Activated T-helper 2 cell treated with anti-CD3 and anti-CD28 coated beads, Interferon-gamma antibody, Interleukin-2, Interleukin-4, amounts not matched to agents 10 μg/mL and 5 μg/mL and 100 μg/mL, durations not matched to agents 14 hours and 24 hours and 36 hours (primary cell): ENCODE measurements at regions of chr7 and their contacts with region 1.

Region 1: DNA sequence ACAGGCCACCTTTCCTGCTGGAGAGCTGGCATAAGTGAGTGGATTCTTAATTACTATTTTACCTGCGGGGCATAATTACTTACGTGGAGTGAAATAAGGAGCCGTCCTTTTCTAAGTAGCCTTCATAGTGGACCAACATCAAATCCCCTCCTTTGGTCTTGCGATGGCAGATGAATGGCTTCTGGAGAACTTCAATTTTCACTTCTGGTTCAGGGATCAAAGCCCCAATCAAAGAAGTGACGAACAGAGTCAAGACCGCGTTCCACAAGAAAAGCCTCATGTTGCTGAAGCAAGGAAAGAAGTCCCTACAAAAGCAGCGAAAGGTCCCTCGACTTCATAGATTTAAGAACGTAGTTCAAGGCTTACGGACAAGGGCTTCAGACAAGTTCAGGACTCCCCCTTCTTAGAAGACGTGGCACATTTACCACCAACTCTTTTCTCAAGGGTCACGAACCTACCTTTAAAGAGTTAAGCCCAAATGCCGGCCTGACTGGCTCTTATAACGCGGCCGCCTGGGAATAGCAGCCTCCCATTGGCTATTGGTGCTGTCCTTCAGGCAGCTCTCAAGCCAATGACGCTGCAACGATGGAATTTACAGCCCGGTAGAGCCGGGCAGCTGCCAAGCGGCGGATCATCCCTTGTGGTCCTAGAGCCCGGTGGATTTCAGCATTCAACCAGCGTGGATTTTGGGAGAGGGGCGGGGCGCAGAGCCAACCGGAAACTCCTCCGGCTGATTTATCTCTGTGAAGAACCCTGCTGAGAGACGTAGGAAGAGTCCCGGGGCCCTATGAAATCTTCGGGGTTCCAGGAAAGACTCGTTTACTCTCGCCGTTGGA is at the start of gene FKBP14:
- DNase-seq: peak; percentile 90
- H3K4me3 Mint-ChIP-seq: peak within 1 kb of the TSS; percentile 93
- H3K27ac Mint-ChIP-seq: peak within 1 kb of the TSS; percentile 84
- H3K4me1 Mint-ChIP-seq: peaks cover 35% of the 10 kb centered on the region
- H3K27me3 Mint-ChIP-seq: no peaks in the 10 kb centered on the region
- total RNA-seq, gene FKBP14: 8.0 and 10.0 TPM in 2 replicates

Region 2: DNA sequence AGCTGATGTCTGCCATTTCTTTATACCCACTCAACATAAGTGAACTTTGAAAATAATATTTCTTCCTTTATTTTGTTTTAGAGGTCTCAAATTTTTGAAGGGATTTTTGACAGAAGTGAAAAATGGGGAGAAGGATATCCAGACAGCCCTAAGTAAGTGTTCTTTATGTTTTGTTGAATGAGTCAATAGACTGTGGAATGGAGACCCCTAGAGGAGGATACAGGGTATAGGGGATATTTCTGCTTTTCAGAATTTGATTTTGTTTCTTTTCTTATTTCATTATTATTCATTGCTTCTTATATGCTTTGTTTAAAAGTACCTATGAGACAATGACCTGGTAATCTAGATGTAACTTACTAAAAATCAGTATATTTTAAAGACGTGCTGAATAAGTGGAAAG is 36.1 kb after region 1 on chr7:
- intact Hi-C with region 1: loop called (anchors 1 kb)
- DNase-seq: no peak
- H3K4me3 Mint-ChIP-seq: no peak overlapping the region
- H3K27ac Mint-ChIP-seq: no peak overlapping the region
- H3K4me1 Mint-ChIP-seq: peaks cover 2% of the 10 kb centered on the region
- H3K27me3 Mint-ChIP-seq: no peaks in the 10 kb centered on the region

Region 3: GRCh38 chr7:30074422-30075030 is 48.1 kb after region 1 on chr7:
- intact Hi-C with region 1: no loop called
- DNase-seq: no peak
- H3K4me3 Mint-ChIP-seq: no peak overlapping the region
- H3K27ac Mint-ChIP-seq: no peak overlapping the region
- H3K4me1 Mint-ChIP-seq: no peaks in the 10 kb centered on the region
- H3K27me3 Mint-ChIP-seq: no peaks in the 10 kb centered on the region

Region 4: DNA sequence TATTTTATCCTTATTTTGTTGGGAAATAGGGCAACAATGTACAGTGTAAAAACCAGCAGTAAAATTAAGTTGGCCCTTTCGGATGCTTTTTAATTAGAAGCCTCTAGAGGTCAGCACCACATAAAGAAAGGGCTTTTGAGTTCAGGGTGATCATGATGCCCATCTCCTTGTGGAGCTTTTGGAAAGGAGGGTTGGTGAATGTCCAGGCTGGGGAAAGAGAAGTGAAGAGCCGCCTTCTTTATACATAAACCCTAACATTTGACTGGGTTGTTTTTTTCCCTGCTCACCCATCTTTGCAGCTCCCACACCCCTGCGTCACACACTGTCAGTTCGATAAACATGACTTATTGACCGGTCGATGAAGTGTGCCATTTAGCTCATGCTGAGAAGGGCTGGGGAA is 138.1 kb after region 1 on chr7:
- intact Hi-C with region 1: loop called (anchors 5 kb)
- DNase-seq: no peak
- H3K4me3 Mint-ChIP-seq: no peak overlapping the region
- H3K27ac Mint-ChIP-seq: peak overlapping the region; percentile 48
- H3K4me1 Mint-ChIP-seq: peaks cover 40% of the 10 kb centered on the region
- H3K27me3 Mint-ChIP-seq: peaks cover 2% of the 10 kb centered on the region

Region 5: DNA sequence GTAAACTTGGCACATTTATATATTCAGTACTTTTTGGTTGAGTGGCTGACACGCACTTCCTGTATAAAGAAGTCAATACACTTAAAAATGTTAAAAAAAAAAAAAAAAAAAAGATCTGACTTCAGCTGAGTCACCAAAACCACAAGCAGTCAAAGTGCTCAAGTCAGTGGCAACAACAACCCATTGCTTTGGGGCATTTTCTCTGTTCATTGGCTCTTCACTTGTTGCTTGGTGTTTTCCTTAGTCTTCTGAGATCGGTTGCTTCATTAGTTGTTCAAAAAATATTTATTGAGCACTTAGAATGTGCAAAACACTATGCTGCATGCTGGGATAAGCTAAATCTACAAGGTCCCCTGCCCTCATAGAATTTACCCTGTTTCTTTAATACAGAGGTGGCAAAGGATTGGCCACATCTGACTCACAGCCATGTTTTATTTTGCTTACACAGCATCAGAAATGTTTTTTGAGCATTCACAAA is 321.7 kb after region 1 on chr7:
- intact Hi-C with region 1: loop called (anchors 5 kb)
- DNase-seq: peak; percentile 44
- H3K4me3 Mint-ChIP-seq: peak overlapping the region; percentile 53
- H3K27ac Mint-ChIP-seq: peak overlapping the region; percentile 85
- H3K4me1 Mint-ChIP-seq: peaks cover 59% of the 10 kb centered on the region
- H3K27me3 Mint-ChIP-seq: no peaks in the 10 kb centered on the region

Region 6: GRCh38 chr7:30504347-30505173 is 478.1 kb after region 1 on chr7 and contains the start of gene GGCT:
- intact Hi-C with region 1: loop called (anchors 2 kb)
- DNase-seq: peak; percentile 97
- H3K4me3 Mint-ChIP-seq: peak within 1 kb of the TSS; percentile 85
- H3K27ac Mint-ChIP-seq: peak within 1 kb of the TSS; percentile 88
- H3K4me1 Mint-ChIP-seq: peaks cover 50% of the 10 kb centered on the region
- H3K27me3 Mint-ChIP-seq: no peaks in the 10 kb centered on the region
- total RNA-seq, gene GGCT: 71.6 and 72.7 TPM in 2 replicates